GM23248 (cell line): ENCODE measurements at regions of chr16 and their contacts with region 1.

Region 1: DNA sequence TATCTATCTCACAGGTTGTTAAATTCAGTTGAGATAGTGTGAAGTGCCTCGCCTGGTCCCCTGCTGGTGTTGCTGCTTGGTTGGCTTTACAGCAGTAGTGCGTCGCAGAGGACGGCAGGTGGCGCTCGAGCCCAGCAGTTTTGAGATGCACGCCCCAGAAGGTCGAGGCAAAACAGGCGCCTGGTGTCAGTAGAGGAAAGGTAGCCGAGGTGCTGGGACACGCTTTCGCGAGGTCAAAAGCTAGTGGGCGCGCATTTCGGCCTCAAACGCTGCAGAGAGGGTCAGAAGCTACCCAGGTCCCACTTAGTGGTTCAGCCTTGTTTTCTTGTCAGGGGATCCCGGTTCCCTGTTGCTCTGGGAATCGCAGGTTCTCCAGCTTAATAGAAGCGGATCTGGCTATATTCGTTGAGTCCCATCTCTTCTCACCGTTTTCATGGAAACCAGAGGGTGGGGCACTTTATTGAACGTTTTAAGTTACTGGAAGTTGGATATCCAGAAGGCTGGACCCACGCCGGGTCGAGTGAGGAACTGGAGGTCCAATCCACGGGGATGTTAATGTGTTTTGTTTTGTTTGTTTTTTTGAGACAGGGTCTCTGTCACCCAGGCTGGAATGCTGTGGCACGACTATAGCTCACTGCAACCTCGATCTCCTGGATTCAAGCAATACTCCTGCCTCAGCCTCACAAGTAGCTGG is 10.3 kb upstream of the ZFP90 start:
- DNase-seq: peak; percentile 86
- H3K4me3 ChIP-seq: peak overlapping the region; percentile 56
- H3K27ac ChIP-seq: no peak overlapping the region
- H3K4me1 ChIP-seq: 0 out of 2 replicates have a peak, but pooled peaks cover 6% of the 10 kb centered on the region
- H3K27me3 ChIP-seq: no peaks in the 10 kb centered on the region

Region 2: GRCh38 chr16:69112285-69113129 is 583.7 kb after region 1 on chr16:
- in situ Hi-C with region 1: loop called (anchors 10 kb)
- DNase-seq: peak; percentile 59
- H3K4me3 ChIP-seq: no peak overlapping the region
- H3K27ac ChIP-seq: no peak overlapping the region
- H3K4me1 ChIP-seq: no peaks in the 10 kb centered on the region
- H3K27me3 ChIP-seq: no peaks in the 10 kb centered on the region